Left ventricle myocardium superior (tissue), 1 donor: ENCODE measurements at regions of chr2 and their contacts with region 1.

Region 1: GRCh38 chr2:213151437-213152064 is at the start of gene IKZF2:
- DNase-seq: peak; percentile 94
- ATAC-seq: peak; percentile 93
- total RNA-seq, gene IKZF2: 6.1 TPM

Region 2: GRCh38 chr2:212686285-212686895 is 465.2 kb before region 1 on chr2:
- intact Hi-C with region 1: loop called (anchors 10 kb)
- DNase-seq: peak; percentile 58
- ATAC-seq: peak; percentile 39

Region 3: DNA sequence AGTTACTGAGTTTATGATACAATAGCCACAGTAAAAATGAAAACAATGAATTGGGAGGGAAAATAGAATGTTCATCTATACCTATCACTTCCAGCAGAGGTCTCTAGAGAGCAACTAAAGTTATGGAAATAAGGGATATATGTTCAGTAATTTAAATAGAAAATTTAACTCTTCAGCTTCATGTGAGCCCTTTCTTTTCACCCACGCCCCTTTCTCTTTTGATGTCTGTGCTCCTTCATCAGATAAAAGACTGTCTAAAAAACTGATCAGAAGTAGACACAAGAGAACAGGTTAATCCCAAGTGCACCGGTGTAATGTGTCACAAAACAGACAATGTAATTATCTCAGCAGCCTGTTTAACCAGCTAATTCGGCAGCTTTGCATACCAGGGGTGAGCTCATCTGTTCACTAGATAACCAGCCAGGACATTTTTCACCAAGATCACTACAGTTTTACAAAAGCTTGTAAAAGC is 374.5 kb before region 1 on chr2:
- intact Hi-C with region 1: loop called (anchors 5 kb)
- DNase-seq: no peak
- ATAC-seq: no peak